ENCODE measurements at regions of chr14 and their contacts with region 1.

Region 1: GRCh38 chr14:59619061-59619460 is 42.4 kb upstream of the CCDC175 start:
- DNase-seq: no peak
- ATAC-seq: no peak
- H3K4me3 ChIP-seq: no peak overlapping the region
- H3K27ac ChIP-seq: no peak overlapping the region
- H3K4me1 ChIP-seq: no peaks in the 10 kb centered on the region
- H3K27me3 ChIP-seq: no peaks in the 10 kb centered on the region
- CTCF ChIP-seq: no peak
- EP300 ChIP-seq: no peak
- POLR2A ChIP-seq: no peak
- RAD21 ChIP-seq: no peak

Region 2: GRCh38 chr14:59564366-59564765 is 54.7 kb before region 1 on chr14:
- CTCF ChIA-PET with region 1: no interaction called
- POLR2A ChIA-PET with region 1: no interaction called
- RAD21 ChIA-PET with region 1: no interaction called
- SMC1A ChIA-PET with region 1: no interaction called
- in situ Hi-C with region 1: no loop called
- intact Hi-C with region 1: loop called (anchors 5 kb)
- DNase-seq: no peak
- ATAC-seq: no peak
- H3K4me3 ChIP-seq: no peak overlapping the region
- H3K27ac ChIP-seq: no peak overlapping the region
- H3K4me1 ChIP-seq: no peaks in the 10 kb centered on the region
- H3K27me3 ChIP-seq: no peaks in the 10 kb centered on the region; a peak in 1 of 4 replicates
- CTCF ChIP-seq: no peak
- EP300 ChIP-seq: no peak
- POLR2A ChIP-seq: no peak
- RAD21 ChIP-seq: no peak